ENCODE measurements at regions of chr12 and their contacts with region 1.

Region 1: DNA sequence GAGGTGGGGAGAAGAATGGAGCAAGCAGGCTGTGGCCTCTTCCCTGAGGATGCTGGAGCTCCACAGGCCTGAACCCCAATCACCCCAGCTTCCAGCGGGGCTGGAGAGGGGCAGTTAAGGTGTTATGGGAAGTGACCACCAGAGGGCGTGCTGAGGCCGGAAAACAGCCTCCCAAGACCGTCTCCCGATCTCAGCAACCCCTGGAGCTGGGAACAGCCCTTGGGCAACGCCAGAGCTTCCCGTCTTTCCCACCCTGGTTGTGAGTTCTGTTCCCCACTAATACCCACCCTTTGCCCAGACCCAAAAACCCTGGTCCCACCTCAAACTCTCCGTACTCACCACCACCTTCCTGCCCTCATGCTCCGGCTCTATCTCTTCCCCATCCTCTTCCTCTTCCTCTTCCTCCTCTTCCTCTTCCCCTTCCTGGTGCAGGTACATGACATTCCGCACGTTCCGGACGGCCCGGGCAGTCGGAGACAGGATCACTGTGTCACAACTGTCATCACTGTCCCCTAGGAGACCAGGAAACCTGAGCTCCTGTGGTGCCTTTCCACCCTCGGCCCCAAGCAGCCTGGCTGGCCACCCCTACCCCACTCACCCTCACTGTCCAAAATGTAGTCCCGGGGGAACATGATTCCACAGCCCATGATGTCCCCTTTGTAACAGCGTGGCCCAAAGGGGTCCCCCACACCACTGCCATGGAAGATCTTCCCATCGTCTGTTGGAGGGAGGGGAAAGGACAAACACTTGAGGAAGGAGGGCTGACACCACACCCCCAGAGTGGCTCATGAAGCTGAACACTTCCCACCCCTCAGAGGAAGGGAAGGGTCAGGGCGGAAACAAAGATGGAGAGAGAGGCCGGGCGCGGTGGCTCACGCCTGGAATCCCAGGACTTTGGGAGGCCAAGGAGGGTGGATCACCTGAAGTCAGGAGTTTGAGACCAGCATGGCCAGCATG is 12.9 kb downstream of the SPRYD3 start:
- DNase-seq: peak; percentile 36 to 72 (median 51)
- ATAC-seq: peak; percentile 80
- H3K4me3 ChIP-seq: no peak overlapping the region
- H3K4me3 Mint-ChIP-seq: no peak overlapping the region
- H3K27ac ChIP-seq: no peak overlapping the region
- H3K27ac Mint-ChIP-seq: peak overlapping the region in 4 of 9 donors; percentile 26 to 74 (median 50)
- H3K4me1 ChIP-seq: peaks cover 0 to 3% of the 10 kb centered on the region in 2 donors
- H3K4me1 Mint-ChIP-seq: peaks cover 0 to 21% (median 11%) of the 10 kb centered on the region in 7 donors
- H3K27me3 ChIP-seq: no peaks in the 10 kb centered on the region
- H3K27me3 Mint-ChIP-seq: no peaks in the 10 kb centered on the region

Region 2: DNA sequence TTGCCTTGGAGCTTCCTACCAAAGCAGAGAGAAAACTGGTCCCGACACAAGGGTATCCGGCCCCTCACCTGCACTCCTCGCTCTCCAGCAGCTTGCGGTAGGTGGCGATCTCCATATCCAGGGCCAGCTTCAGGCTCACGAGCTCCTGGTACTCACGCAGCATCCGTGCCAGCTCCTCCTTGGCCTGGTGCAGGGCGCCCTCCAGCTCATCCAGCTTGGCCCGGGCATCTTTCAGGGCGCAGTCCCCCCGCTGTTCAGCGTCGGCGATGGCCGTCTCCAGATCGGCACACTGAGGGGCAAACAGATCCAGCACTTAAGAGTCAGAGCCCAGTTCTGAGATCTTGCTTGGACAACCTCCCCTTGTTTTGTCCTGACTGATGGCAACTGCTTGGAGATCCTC is 478.7 kb before region 1 on chr12:
- CTCF ChIA-PET with region 1: no interaction called
- POLR2A ChIA-PET with region 1: no interaction called
- intact Hi-C with region 1: no loop called
- DNase-seq: no peak
- ATAC-seq: no peak
- H3K4me3 ChIP-seq: no peak overlapping the region
- H3K4me3 Mint-ChIP-seq: peak overlapping the region in 5 of 10 donors; percentile 4 to 67 (median 35)
- H3K27ac ChIP-seq: no peak overlapping the region
- H3K27ac Mint-ChIP-seq: peak overlapping the region in 8 of 9 donors; percentile 27 to 97 (median 94)
- H3K4me1 ChIP-seq: peaks cover 0 to 57% of the 10 kb centered on the region in 2 donors
- H3K4me1 Mint-ChIP-seq: peaks cover 37 to 88% (median 73%) of the 10 kb centered on the region in 7 donors
- H3K27me3 ChIP-seq: no peaks in the 10 kb centered on the region
- H3K27me3 Mint-ChIP-seq: peaks cover 0 to 1% (median 0%) of the 10 kb centered on the region in 5 donors

Region 3: DNA sequence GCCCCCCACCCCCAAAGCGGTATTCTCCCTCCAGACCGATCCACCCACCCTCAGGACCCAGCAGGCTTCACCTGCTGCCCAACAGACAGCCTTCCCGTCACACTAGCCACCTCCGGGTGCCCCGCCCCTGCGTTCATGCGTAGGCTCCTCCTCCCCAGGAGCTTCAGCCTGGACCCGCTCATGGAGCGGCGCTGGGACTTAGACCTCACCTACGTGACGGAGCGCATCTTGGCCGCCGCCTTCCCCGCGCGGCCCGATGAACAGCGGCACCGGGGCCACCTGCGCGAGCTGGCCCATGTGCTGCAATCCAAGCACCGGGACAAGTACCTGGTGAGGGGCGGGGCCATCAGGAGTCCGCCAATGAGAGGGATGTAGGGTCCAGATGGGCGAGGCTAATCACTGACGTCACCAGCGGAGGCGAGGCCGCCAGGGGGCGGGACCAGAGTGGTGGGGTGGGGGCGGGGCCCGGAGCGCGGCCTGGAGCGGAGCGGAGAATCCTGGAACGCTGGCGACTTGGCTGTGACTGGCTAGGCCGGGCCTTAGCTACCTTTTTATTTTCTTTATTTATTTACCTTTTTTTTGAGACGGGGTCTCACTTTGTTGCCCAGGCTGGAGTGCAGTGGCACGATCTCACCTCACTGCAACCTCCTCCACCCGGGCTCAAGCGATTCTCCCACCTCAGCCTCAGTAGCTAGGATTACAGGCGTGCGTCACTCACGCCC is 12.0 kb before region 1 on chr12:
- CTCF ChIA-PET with region 1: interaction called, 20 read pairs
- POLR2A ChIA-PET with region 1: interaction called, 4 read pairs
- intact Hi-C with region 1: loop called in 1 of 2 experiments (anchors 1 kb)
- DNase-seq: peak; percentile 85 to 94 (median 93)
- ATAC-seq: peak; percentile 98
- H3K4me3 ChIP-seq: peak overlapping the region; percentile 95
- H3K4me3 Mint-ChIP-seq: peak overlapping the region; percentile 89 to 97 (median 94)
- H3K27ac ChIP-seq: peak overlapping the region; percentile 71
- H3K27ac Mint-ChIP-seq: peak overlapping the region; percentile 83 to 96 (median 92)
- H3K4me1 ChIP-seq: peaks cover 6 to 9% of the 10 kb centered on the region in 2 donors
- H3K4me1 Mint-ChIP-seq: peaks cover 8 to 14% (median 11%) of the 10 kb centered on the region in 7 donors
- H3K27me3 ChIP-seq: no peaks in the 10 kb centered on the region
- H3K27me3 Mint-ChIP-seq: no peaks in the 10 kb centered on the region

Region 4: DNA sequence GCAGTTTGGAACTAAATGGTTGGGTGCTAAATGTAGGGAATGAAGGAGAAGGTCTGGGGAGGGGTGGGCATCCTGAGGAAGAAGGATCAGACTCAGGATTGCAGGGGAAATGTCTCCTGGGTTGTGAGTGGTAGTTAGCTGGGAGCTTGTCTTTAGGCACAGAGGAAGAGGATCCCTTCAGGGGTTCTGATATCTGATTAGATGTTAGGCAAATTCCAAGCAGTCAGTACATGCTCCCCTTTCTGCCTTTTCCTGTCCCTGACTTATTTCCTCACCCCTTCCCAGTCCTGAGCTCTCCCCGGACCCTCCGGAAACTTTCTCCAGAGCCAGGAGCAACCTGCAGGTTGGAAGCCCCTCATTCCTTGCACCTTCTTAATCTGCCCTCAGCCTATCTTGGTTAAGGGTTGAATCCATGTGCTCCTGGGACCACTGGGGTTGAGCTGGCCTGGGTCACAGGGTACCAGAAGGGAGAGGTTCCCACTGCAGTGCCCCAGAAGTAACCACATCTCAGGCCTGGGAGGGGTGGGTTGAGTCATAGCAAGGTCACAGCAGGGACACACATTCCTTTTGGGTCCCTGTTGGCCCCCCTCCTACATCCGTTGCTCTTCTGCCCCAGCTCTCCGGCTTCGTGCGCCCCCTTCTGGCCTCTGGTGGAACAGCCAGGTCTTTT is 32.9 kb after region 1 on chr12:
- CTCF ChIA-PET with region 1: interaction called, 100 read pairs
- POLR2A ChIA-PET with region 1: interaction called, 20 read pairs
- intact Hi-C with region 1: loop called (anchors 1 kb)
- DNase-seq: peak; percentile 73 to 89 (median 85)
- ATAC-seq: peak; percentile 88
- H3K4me3 ChIP-seq: no peak overlapping the region
- H3K4me3 Mint-ChIP-seq: peak overlapping the region; percentile 43 to 88 (median 80)
- H3K27ac ChIP-seq: no peak overlapping the region
- H3K27ac Mint-ChIP-seq: peak overlapping the region in 6 of 9 donors; percentile 8 to 73 (median 33)
- H3K4me1 ChIP-seq: peaks cover 41 to 46% of the 10 kb centered on the region in 2 donors
- H3K4me1 Mint-ChIP-seq: peaks cover 40 to 52% (median 48%) of the 10 kb centered on the region in 7 donors
- H3K27me3 ChIP-seq: no peaks in the 10 kb centered on the region
- H3K27me3 Mint-ChIP-seq: peaks cover 0 to 37% (median 0%) of the 10 kb centered on the region in 5 donors

Region 5: DNA sequence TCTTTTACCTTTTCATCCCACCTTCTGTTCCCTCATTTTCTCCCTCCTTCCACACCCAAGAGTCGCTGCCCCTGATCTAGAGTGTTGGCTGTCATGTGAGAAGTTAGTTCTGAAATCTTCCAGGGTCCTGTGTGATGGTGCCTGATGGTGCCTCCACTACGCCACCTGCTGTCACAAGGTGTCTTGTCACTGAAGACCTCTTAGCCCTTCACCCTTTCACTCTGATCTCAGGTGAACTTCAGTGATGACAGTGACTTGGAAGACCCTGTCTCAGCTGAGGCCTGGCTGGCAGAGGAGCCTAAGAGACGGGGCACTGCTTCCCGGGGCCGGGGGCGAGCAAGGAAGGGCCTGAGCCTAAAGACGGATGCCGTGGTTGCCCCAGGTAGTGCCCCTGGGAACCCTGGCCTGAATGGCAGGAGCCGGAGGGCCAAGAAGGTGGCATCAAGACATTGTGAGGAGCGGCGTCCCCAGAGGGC is 221.5 kb after region 1 on chr12:
- CTCF ChIA-PET with region 1: interaction called, 4 read pairs
- POLR2A ChIA-PET with region 1: no interaction called
- intact Hi-C with region 1: loop called in 1 of 2 experiments (anchors 1 kb)
- DNase-seq: peak; percentile 43 to 76 (median 69)
- ATAC-seq: peak; percentile 94
- H3K4me3 ChIP-seq: no peak overlapping the region
- H3K4me3 Mint-ChIP-seq: no peak overlapping the region
- H3K27ac ChIP-seq: no peak overlapping the region
- H3K27ac Mint-ChIP-seq: peak overlapping the region in 4 of 9 donors; percentile 8 to 86 (median 25)
- H3K4me1 ChIP-seq: no peaks in the 10 kb centered on the region
- H3K4me1 Mint-ChIP-seq: peaks cover 4 to 11% (median 5%) of the 10 kb centered on the region in 7 donors
- H3K27me3 ChIP-seq: no peaks in the 10 kb centered on the region
- H3K27me3 Mint-ChIP-seq: no peaks in the 10 kb centered on the region